Right lobe of liver (tissue), 6 donors: ENCODE measurements at regions of chr13 and their contacts with region 1.

Region 1: DNA sequence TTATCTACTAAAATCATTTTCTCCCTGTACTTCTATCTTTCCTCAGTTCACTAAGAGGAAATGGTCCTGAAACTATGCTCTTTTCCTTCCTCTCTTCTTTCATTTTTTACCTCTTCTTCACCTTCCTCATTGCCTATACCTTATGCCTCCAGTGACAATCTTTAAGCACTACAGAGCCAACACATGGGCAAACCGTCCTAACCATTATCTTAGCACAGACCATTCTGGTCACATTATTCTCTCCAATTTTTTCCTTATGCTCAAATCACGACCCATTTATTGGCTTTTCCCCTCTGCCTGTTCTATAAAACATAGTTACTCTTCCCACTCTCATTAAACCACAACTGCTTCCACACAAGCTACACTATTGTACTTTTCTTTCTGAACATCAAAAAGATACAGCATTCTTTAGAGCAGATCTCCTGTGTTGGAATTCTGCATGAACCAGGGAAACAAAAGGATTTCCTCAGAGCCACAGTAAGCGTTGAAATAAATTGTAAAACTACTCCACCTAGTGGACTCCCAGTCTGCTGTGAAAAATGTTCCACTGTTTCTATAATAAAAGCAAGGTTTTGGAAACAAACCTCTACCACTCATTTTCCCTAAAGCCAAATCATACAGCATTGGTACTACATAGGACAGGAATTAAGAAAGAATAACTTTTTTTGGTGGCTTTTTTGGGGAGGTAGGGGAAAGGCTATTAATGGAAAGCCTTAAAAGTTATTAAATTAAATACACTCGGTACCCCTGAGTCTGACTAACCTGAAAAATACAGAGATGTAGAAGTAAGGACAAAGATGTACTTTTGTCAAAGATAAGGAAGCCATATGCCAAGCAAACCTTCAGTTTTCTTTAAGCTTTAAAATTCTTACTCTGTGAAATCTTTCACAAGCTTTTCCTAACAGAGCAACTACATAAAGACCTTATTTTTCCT is 19.5 kb downstream of the NUFIP1 start:
- DNase-seq: no peak
- ATAC-seq: peak; percentile 83 to 88 (median 86)
- H3K4me3 ChIP-seq: no peak overlapping the region
- H3K27ac ChIP-seq: no peak overlapping the region
- H3K4me1 ChIP-seq: no peaks in the 10 kb centered on the region
- H3K27me3 ChIP-seq: no peaks in the 10 kb centered on the region
- CTCF ChIP-seq: peak; percentile 70 to 82 (median 76)
- POLR2A ChIP-seq: no peak

Region 2: GRCh38 chr13:44484562-44485138 is 485.2 kb before region 1 on chr13:
- intact Hi-C with region 1: loop called in 1 of 2 experiments (anchors 10 kb)
- DNase-seq: no peak
- ATAC-seq: no peak
- H3K4me3 ChIP-seq: no peak overlapping the region
- H3K27ac ChIP-seq: no peak overlapping the region
- H3K4me1 ChIP-seq: no peaks in the 10 kb centered on the region
- H3K27me3 ChIP-seq: no peaks in the 10 kb centered on the region
- CTCF ChIP-seq: no peak
- POLR2A ChIP-seq: no peak

Region 3: DNA sequence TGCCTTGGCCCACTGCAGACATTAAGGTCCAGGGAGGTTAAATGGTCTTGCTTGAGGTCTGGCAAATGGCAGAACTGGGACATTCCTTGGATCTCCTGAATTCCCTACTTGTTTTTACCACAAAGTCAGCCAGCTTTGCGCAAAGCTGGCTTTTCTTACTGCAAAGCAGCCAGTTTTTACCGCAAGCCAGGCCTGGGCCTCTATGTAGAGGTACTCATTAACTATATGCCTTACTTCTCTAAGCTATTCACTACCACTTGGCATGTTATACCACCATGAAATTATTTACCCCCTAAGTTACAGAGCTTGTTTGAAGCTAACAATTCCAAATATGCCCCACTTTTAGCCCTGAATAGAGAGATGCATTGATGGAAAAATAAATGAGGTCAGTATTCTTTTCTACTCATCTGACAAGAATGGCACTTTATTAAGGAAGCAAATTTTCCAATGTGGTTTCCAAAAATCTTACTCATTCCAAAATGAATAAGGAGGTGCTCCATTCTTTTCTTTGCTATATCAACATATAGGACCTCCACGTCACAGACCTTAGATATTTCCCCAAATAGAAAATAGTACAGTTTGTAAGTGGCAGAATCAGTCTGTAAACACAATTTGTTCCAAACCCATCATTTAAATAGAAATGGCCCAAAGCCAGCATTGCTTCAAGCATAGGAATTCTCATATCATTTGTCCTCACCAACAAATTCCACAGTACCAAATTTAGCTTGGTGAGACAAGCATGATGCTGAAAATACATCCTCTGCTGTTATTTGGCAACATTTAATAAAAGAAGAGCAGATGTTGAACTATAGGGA is 249.8 kb before region 1 on chr13:
- intact Hi-C with region 1: no loop called
- DNase-seq: no peak
- ATAC-seq: no peak
- H3K4me3 ChIP-seq: no peak overlapping the region
- H3K27ac ChIP-seq: no peak overlapping the region
- H3K4me1 ChIP-seq: no peaks in the 10 kb centered on the region
- H3K27me3 ChIP-seq: no peaks in the 10 kb centered on the region
- CTCF ChIP-seq: no peak
- POLR2A ChIP-seq: no peak

Region 4: GRCh38 chr13:45132369-45133064 is 162.7 kb after region 1 on chr13:
- intact Hi-C with region 1: no loop called
- DNase-seq: no peak
- ATAC-seq: no peak
- H3K4me3 ChIP-seq: no peak overlapping the region
- H3K27ac ChIP-seq: no peak overlapping the region
- H3K4me1 ChIP-seq: no peaks in the 10 kb centered on the region
- H3K27me3 ChIP-seq: no peaks in the 10 kb centered on the region
- CTCF ChIP-seq: no peak
- POLR2A ChIP-seq: no peak